Activated CD8-positive, alpha-beta memory T cell treated with anti-CD3 and anti-CD28 coated beads, Interleukin-2, amount 10 ng/mL, durations not matched to agents 7 days and 5 days (primary cell): ENCODE measurements at regions of chr3 and their contacts with region 1.

Region 1: GRCh38 chr3:69161587-69162307 is 39.4 kb upstream of the LMOD3 start:
- DNase-seq: peak; percentile 53
- ATAC-seq: peak; percentile 69
- H3K4me3 Mint-ChIP-seq: no peak overlapping the region
- H3K27ac Mint-ChIP-seq: peak overlapping the region; percentile 11
- H3K4me1 Mint-ChIP-seq: peaks cover 18% of the 10 kb centered on the region
- H3K27me3 Mint-ChIP-seq: no peaks in the 10 kb centered on the region

Region 2: GRCh38 chr3:68176600-68176999 is 985.1 kb before region 1 on chr3:
- CTCF ChIA-PET with region 1: no interaction called
- DNase-seq: no peak
- ATAC-seq: no peak
- H3K4me3 Mint-ChIP-seq: no peak overlapping the region
- H3K27ac Mint-ChIP-seq: no peak overlapping the region
- H3K4me1 Mint-ChIP-seq: no peaks in the 10 kb centered on the region
- H3K27me3 Mint-ChIP-seq: no peaks in the 10 kb centered on the region

Region 3: GRCh38 chr3:68924897-68925296 is 236.8 kb before region 1 on chr3:
- CTCF ChIA-PET with region 1: no interaction called
- DNase-seq: no peak
- ATAC-seq: no peak
- H3K4me3 Mint-ChIP-seq: no peak overlapping the region
- H3K27ac Mint-ChIP-seq: no peak overlapping the region
- H3K4me1 Mint-ChIP-seq: no peaks in the 10 kb centered on the region
- H3K27me3 Mint-ChIP-seq: peaks cover 45% of the 10 kb centered on the region

Region 4: DNA sequence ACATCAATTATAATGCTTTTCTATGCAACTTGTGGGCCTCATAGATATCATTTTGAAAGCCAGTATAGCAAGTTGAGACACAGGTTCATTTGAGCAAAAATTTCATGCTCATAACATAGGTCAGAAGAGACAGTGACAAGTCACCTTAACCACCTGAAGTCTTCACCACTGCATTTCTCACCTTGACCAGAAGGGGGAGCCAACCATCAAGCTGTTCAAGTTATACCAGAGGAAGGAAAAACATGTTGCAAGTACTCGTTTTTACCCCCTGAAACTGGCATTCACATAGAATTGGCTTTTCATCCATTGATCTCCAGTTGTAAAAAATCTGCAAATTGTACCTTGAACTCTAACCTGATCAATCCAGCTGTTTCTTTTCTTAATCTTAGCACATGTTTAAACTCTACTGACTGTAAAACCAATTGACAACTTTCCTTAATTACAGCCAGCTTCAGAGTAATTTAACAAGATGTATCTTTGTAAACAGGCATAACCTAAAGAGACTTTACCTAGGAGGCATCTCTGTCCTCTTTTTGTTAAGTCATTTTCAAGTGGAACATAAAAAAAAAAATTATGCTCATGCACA is 40.8 kb before region 1 on chr3:
- CTCF ChIA-PET with region 1: interaction called, 23 read pairs
- DNase-seq: peak; percentile 90
- ATAC-seq: peak; percentile 87
- H3K4me3 Mint-ChIP-seq: no peak overlapping the region
- H3K27ac Mint-ChIP-seq: peak overlapping the region; percentile 7
- H3K4me1 Mint-ChIP-seq: peaks cover 2% of the 10 kb centered on the region
- H3K27me3 Mint-ChIP-seq: no peaks in the 10 kb centered on the region

Region 5: GRCh38 chr3:69191516-69191915 is 29.8 kb after region 1 on chr3:
- CTCF ChIA-PET with region 1: interaction called, 15 read pairs
- DNase-seq: no peak
- ATAC-seq: no peak
- H3K4me3 Mint-ChIP-seq: no peak overlapping the region
- H3K27ac Mint-ChIP-seq: peak overlapping the region; percentile 11
- H3K4me1 Mint-ChIP-seq: peaks cover 54% of the 10 kb centered on the region
- H3K27me3 Mint-ChIP-seq: no peaks in the 10 kb centered on the region

Region 6: GRCh38 chr3:69236812-69237707 is 75.3 kb after region 1 on chr3:
- CTCF ChIA-PET with region 1: interaction called, 26 read pairs
- DNase-seq: no peak
- ATAC-seq: peak; percentile 61
- H3K4me3 Mint-ChIP-seq: peak overlapping the region; percentile 48
- H3K27ac Mint-ChIP-seq: peak overlapping the region; percentile 55
- H3K4me1 Mint-ChIP-seq: peaks cover 27% of the 10 kb centered on the region
- H3K27me3 Mint-ChIP-seq: no peaks in the 10 kb centered on the region

Region 7: GRCh38 chr3:69368129-69368741 is 206.5 kb after region 1 on chr3:
- CTCF ChIA-PET with region 1: interaction called, 11 read pairs
- DNase-seq: peak; percentile 79
- ATAC-seq: peak; percentile 85
- H3K4me3 Mint-ChIP-seq: no peak overlapping the region
- H3K27ac Mint-ChIP-seq: no peak overlapping the region
- H3K4me1 Mint-ChIP-seq: peaks cover 16% of the 10 kb centered on the region
- H3K27me3 Mint-ChIP-seq: peaks cover 16% of the 10 kb centered on the region

Region 8: GRCh38 chr3:69425261-69425660 is 263.5 kb after region 1 on chr3:
- CTCF ChIA-PET with region 1: interaction called, 10 read pairs
- DNase-seq: peak; percentile 46
- ATAC-seq: peak; percentile 58
- H3K4me3 Mint-ChIP-seq: no peak overlapping the region
- H3K27ac Mint-ChIP-seq: no peak overlapping the region
- H3K4me1 Mint-ChIP-seq: no peaks in the 10 kb centered on the region
- H3K27me3 Mint-ChIP-seq: peaks cover 4% of the 10 kb centered on the region